Cardiac septum (tissue), 1 donor: ENCODE measurements at regions of chr14 and their contacts with region 1.

Region 1: GRCh38 chr14:77124345-77125280 is 17.0 kb downstream of the ZDHHC22 start:
- DNase-seq: no peak

Region 2: GRCh38 chr14:77076113-77076631 is 48.4 kb before region 1 on chr14:
- intact Hi-C with region 1: loop called (anchors 2 kb)
- DNase-seq: peak; percentile 81